Activated CD4-positive, alpha-beta T cell treated with anti-CD3 and anti-CD28 coated beads, Interleukin-2, amount 10 ng/mL, durations not matched to agents 24 days and 14 days (primary cell): ENCODE measurements at regions of chr4 and their contacts with region 1.

Region 1: GRCh38 chr4:122151982-122152710 is at the start of gene BLTP1:
- DNase-seq: peak; percentile 97
- H3K4me3 Mint-ChIP-seq: peak within 1 kb of the TSS; percentile 92
- H3K27ac Mint-ChIP-seq: peak within 1 kb of the TSS; percentile 95
- H3K4me1 Mint-ChIP-seq: peaks cover 41% of the 10 kb centered on the region
- H3K27me3 Mint-ChIP-seq: no peaks in the 10 kb centered on the region
- total RNA-seq, gene BLTP1: 26.2 and 28.9 TPM in 2 replicates

Region 2: GRCh38 chr4:121706595-121707021 is 445.5 kb before region 1 on chr4:
- intact Hi-C with region 1: loop called (anchors 10 kb)
- DNase-seq: peak; percentile 80
- H3K4me3 Mint-ChIP-seq: peak overlapping the region; percentile 22
- H3K27ac Mint-ChIP-seq: peak overlapping the region; percentile 66
- H3K4me1 Mint-ChIP-seq: peaks cover 34% of the 10 kb centered on the region
- H3K27me3 Mint-ChIP-seq: peaks cover 20% of the 10 kb centered on the region

Region 3: GRCh38 chr4:121869841-121870656 is 282.1 kb before region 1 on chr4 and contains the start of gene BBS7:
- intact Hi-C with region 1: loop called (anchors 2 kb)
- DNase-seq: peak; percentile 99
- H3K4me3 Mint-ChIP-seq: peak within 1 kb of the TSS; percentile 98
- H3K27ac Mint-ChIP-seq: peak within 1 kb of the TSS; percentile 91
- H3K4me1 Mint-ChIP-seq: peaks cover 12% of the 10 kb centered on the region
- H3K27me3 Mint-ChIP-seq: peaks cover 12% of the 10 kb centered on the region
- total RNA-seq, gene BBS7: 18.3 and 18.7 TPM in 2 replicates

Region 4: GRCh38 chr4:122129061-122129460 is 23.1 kb before region 1 on chr4:
- intact Hi-C with region 1: loop called (anchors 1 kb)
- DNase-seq: peak; percentile 64
- H3K4me3 Mint-ChIP-seq: peak overlapping the region; percentile 1
- H3K27ac Mint-ChIP-seq: no peak overlapping the region
- H3K4me1 Mint-ChIP-seq: peaks cover 20% of the 10 kb centered on the region
- H3K27me3 Mint-ChIP-seq: no peaks in the 10 kb centered on the region

Region 5: GRCh38 chr4:122854447-122855352 is 702.6 kb after region 1 on chr4:
- intact Hi-C with region 1: no loop called
- DNase-seq: no peak
- H3K4me3 Mint-ChIP-seq: no peak overlapping the region
- H3K27ac Mint-ChIP-seq: no peak overlapping the region
- H3K4me1 Mint-ChIP-seq: no peaks in the 10 kb centered on the region
- H3K27me3 Mint-ChIP-seq: peaks cover 38% of the 10 kb centered on the region

Region 6: DNA sequence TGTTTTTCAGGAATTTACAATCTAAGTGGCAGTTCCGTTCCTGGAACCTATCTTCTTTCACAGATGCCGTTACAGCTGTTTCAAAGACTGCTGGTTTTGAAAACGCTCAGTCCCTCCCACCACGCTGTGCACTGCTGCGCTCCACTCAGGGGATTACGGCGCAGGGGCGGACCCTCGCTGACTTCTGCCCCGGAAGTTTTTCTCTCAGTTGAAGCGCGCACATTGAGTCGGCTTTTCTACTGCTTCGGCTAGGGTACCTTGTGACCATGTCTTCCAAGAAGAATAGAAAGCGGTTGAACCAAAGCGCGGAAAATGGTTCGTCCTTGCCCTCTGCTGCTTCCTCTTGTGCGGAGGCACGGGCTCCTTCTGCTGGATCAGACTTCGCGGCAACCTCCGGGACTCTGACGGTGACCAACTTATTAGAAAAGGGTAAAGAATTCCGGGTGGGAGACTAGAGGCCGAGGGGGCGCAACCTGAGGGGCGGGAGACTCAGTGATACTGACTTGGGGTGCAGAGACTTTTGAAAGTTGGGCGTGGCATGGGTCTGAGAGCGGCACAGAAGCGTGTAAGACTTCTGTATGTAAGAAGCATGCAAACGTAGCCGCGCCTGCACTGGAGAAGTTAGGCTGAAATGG is 770.8 kb after region 1 on chr4:
- intact Hi-C with region 1: loop called (anchors 5 kb)
- DNase-seq: peak; percentile 97
- H3K4me3 Mint-ChIP-seq: no peak overlapping the region
- H3K27ac Mint-ChIP-seq: peak overlapping the region; percentile 96
- H3K4me1 Mint-ChIP-seq: peaks cover 24% of the 10 kb centered on the region
- H3K27me3 Mint-ChIP-seq: no peaks in the 10 kb centered on the region